ENCODE measurements at regions of chr2 and their contacts with region 1.

Region 1: DNA sequence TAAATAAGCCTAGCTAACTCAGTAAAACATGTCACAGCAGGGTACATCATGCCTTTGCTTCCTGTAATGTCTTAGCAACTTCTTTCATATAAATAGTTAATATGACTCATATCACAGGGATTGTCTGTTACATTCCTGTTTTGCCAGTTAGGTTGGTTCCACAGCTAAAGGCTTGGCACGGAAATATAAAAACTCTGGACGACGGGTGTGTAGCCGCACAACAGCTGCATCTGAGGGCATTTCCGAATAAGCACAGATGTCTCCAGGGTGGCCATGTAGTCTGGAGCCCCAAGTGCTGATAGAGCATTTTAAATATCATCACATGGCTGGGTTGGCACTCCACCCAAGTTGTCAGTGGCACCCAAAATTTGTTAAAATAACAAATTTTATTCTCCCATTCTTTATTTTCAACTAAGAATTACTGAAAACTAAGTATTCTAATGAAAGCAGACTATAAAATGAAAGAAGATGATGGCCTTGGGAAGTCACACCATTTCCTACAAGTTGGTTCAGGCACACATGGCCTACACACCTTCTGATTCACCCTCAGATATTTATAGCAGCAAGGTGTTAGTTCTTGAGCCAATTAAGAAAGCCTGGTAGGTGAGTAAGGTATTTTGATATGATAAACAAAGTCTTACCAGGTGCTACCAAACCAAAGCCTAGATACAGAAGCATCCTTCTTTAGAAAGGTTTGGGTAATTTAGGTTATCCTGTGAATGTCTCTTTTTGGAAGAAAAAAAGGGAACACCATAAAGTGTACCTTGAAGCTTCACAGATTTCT is 61.8 kb upstream of the STK17B start:
- DNase-seq: peak; percentile 72
- H3K4me3 Mint-ChIP-seq: peak overlapping the region; percentile 12
- H3K27ac Mint-ChIP-seq: peak overlapping the region; percentile 84
- H3K4me1 Mint-ChIP-seq: peaks cover 23% of the 10 kb centered on the region
- H3K27me3 Mint-ChIP-seq: no peaks in the 10 kb centered on the region
- CTCF ChIP-seq: no peak

Region 2: DNA sequence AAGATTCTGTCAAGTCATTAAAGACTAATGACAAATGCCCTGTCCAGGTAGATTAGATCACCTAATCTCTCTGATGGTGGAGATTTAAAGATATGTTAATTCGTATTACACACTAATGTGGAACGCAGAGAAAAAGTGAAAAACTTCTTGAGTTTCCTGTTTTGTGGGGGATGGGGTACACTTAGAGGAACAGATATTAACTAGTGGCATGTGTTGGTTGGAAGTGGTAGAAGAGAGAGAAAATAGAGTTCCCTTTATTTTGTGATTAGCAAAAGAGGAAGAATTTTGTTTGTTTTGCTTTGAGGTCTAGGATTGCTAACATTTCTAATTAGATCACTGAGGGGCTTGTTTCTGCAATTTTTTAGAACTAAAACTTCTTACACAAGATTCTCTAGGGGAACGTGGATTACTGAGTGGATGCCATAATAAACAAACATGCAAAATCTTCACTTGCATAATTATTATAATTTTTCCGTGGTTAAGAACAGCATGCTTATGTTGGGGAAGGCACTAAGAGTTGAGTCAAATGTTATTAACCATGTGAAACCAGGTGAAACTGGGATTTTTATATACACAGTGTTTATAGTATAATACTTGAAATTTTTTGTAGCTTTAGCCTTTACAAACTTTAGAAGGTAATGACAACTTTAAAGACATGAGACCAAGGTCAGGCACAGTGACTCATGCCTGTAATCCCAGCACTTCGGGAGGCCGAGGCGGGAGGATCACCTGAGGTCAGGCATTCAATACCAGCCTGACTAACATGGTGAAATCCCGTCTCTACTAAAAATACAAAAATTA is 35.5 kb after region 1 on chr2:
- CTCF ChIA-PET with region 1: no interaction called
- intact Hi-C with region 1: loop called (anchors 2 kb)
- DNase-seq: peak; percentile 43
- H3K4me3 Mint-ChIP-seq: peak overlapping the region; percentile 10
- H3K27ac Mint-ChIP-seq: peak overlapping the region; percentile 64
- H3K4me1 Mint-ChIP-seq: peaks cover 47% of the 10 kb centered on the region
- H3K27me3 Mint-ChIP-seq: no peaks in the 10 kb centered on the region
- CTCF ChIP-seq: no peak